Activated CD8-positive, alpha-beta T cell treated with anti-CD3 and anti-CD28 coated beads, Interleukin-2, amount 10 ng/mL, durations not matched to agents 7 days and 5 days (primary cell): ENCODE measurements at regions of chr11 and their contacts with region 1.

Region 1: GRCh38 chr11:120682866-120683265 is 171.3 kb downstream of the GRIK4 start:
- DNase-seq: no peak
- ATAC-seq: no peak
- H3K4me3 Mint-ChIP-seq: no peak overlapping the region
- H3K27ac Mint-ChIP-seq: no peak overlapping the region
- H3K4me1 Mint-ChIP-seq: no peaks in the 10 kb centered on the region
- H3K27me3 Mint-ChIP-seq: peaks cover 13% of the 10 kb centered on the region

Region 2: GRCh38 chr11:120511116-120511819 is 171.6 kb before region 1 on chr11 and contains the start of gene GRIK4:
- CTCF ChIA-PET with region 1: interaction called, 19 read pairs
- POLR2A ChIA-PET with region 1: no interaction called
- DNase-seq: peak; percentile 82
- ATAC-seq: peak; percentile 95
- H3K4me3 Mint-ChIP-seq: no peak within 1 kb of the TSS
- H3K27ac Mint-ChIP-seq: no peak within 1 kb of the TSS
- H3K4me1 Mint-ChIP-seq: peaks cover 2% of the 10 kb centered on the region
- H3K27me3 Mint-ChIP-seq: peaks cover 51% of the 10 kb centered on the region
- total RNA-seq, gene GRIK4: not detected

Region 3: DNA sequence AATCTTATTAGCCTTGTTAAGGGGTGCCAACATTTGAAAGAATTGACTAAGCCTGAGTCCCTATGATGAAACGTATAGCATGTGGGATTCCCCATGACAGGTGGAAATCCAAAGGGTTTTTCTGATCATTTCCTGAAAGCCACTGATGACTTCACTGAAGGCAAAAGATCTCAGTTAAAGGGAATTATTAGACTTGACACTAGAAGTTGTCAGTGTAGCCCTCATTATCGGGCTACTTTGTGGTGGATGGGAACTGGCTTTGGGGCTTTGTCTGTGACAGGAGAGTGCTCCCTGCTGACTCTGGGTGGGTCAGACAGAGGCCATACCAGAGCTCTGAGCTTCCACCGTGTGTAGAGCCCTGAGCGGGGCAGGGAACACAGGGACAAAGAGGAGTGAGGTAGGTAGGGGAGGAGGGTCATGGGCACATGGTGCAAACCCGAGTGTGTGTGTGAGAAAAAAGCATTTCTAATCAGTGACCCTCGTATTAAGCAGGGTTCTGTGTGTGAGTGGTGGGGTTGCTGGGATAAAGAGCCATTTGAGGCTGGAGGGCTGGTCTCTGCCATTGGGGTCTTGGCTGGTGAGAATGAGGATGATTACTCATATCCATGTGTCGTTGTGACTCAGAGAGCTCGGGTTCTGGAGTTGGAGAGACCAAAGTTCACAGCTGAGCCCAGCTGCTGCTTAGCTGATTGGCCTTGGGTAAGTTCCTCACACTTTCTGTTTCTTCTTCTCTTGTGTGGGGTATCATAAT is 70.2 kb before region 1 on chr11:
- CTCF ChIA-PET with region 1: no interaction called
- POLR2A ChIA-PET with region 1: no interaction called
- DNase-seq: peak; percentile 26
- ATAC-seq: peak; percentile 23
- H3K4me3 Mint-ChIP-seq: no peak overlapping the region
- H3K27ac Mint-ChIP-seq: no peak overlapping the region
- H3K4me1 Mint-ChIP-seq: peaks cover 11% of the 10 kb centered on the region
- H3K27me3 Mint-ChIP-seq: no peaks in the 10 kb centered on the region